Activated T-helper 1 cell treated with anti-CD3 and anti-CD28 coated beads, Interleukin-12 subunit alpha, Interleukin-12 subunit beta, Interleukin-2, Interleukin-4 antibody, amounts not matched to agents 30 ng/mL and 10 ng/mL and 1 ng/mL, durations not matched to agents 14 hours and 24 hours and 36 hours (primary cell): ENCODE measurements at regions of chr17 and their contacts with region 1.

Region 1: GRCh38 chr17:45782889-45783592 is 1.1 kb upstream of the CRHR1 start:
- DNase-seq: no peak
- H3K4me3 Mint-ChIP-seq: peak overlapping the region; percentile 81
- H3K27ac Mint-ChIP-seq: peak overlapping the region; percentile 29
- H3K4me1 Mint-ChIP-seq: no peaks in the 10 kb centered on the region
- H3K27me3 Mint-ChIP-seq: peaks cover 73% of the 10 kb centered on the region

Region 2: DNA sequence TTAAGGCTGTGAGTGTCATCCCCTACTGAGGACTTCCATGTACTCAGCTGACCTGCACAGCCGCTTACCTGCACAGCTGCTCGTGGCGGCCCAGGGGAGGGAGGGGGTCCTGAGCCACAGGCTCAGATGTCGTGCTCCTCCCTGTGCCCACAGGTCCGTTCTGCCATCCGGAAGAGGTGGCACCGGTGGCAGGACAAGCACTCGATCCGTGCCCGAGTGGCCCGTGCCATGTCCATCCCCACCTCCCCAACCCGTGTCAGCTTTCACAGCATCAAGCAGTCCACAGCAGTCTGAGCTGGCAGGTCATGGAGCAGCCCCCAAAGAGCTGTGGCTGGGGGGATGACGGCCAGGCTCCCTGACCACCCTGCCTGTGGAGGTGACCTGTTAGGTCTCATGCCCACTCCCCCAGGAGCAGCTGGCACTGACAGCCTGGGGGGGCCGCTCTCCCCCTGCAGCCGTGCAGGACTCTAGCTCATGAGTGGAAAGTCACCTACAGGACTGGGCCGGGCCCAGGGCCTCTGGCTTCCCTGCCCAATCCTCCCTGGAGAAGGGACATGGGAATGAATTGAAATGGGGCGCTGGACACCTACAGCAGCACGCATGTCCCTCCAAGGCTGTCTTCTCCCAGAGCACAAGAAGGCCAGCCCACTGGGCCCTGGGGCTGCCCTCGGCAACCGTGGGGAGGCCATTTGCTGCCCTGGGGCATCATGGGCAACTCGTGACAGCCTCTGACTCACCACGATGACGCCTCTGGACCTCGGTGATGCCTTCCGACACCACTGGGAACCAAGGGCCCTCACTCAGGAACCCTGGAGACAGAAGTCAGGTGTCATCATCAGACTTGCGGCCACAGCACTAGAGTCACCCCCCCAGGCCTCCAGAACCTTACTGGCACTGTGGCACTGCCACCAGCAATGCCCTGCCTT is 51.7 kb after region 1 on chr17:
- intact Hi-C with region 1: loop called (anchors 10 kb)
- DNase-seq: no peak
- H3K4me3 Mint-ChIP-seq: no peak overlapping the region
- H3K27ac Mint-ChIP-seq: no peak overlapping the region
- H3K4me1 Mint-ChIP-seq: no peaks in the 10 kb centered on the region
- H3K27me3 Mint-ChIP-seq: peaks cover 1% of the 10 kb centered on the region

Region 3: DNA sequence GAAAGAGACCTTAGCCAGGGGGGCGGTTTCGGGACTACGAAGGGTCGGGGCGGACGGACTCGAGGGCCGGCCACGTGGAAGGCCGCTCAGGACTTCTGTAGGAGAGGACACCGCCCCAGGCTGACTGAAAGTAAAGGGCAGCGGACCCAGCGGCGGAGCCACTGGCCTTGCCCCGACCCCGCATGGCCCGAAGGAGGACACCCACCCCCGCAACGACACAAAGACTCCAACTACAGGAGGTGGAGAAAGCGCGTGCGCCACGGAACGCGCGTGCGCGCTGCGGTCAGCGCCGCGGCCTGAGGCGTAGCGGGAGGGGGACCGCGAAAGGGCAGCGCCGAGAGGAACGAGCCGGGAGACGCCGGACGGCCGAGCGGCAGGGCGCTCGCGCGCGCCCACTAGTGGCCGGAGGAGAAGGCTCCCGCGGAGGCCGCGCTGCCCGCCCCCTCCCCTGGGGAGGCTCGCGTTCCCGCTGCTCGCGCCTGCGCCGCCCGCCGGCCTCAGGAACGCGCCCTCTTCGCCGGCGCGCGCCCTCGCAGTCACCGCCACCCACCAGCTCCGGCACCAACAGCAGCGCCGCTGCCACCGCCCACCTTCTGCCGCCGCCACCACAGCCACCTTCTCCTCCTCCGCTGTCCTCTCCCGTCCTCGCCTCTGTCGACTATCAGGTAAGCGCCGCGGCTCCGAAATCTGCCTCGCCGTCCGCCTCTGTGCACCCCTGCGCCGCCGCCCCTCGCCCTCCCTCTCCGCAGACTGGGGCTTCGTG is 111.2 kb after region 1 on chr17 and contains the start of gene MAPT:
- intact Hi-C with region 1: loop called (anchors 5 kb)
- DNase-seq: peak; percentile 77
- H3K4me3 Mint-ChIP-seq: peak within 1 kb of the TSS; percentile 74
- H3K27ac Mint-ChIP-seq: peak within 1 kb of the TSS; percentile 61
- H3K4me1 Mint-ChIP-seq: peaks cover 5% of the 10 kb centered on the region
- H3K27me3 Mint-ChIP-seq: peaks cover 57% of the 10 kb centered on the region
- total RNA-seq, gene MAPT: 0.64 and 1.1 TPM in 2 replicates